Adrenal gland (tissue), 19 donors: ENCODE measurements at regions of chr19 and their contacts with region 1.

Region 1: GRCh38 chr19:6048808-6049405 is 61.4 kb downstream of the RFX2 start:
- DNase-seq: peak; percentile 67 to 90 (median 78)
- H3K4me3 ChIP-seq: no peak overlapping the region
- H3K27ac ChIP-seq: no peak overlapping the region
- H3K4me1 ChIP-seq: peaks cover 0 to 6% of the 10 kb centered on the region in 2 donors
- H3K27me3 ChIP-seq: no peaks in the 10 kb centered on the region
- CTCF ChIP-seq: peak; percentile 77 to 93 (median 84)
- POLR2A ChIP-seq: no peak

Region 2: GRCh38 chr19:6125571-6125989 is 76.7 kb after region 1 on chr19:
- intact Hi-C with region 1: loop called (anchors 2 to 5 kb)
- DNase-seq: peak; percentile 57 to 84 (median 65)
- H3K4me3 ChIP-seq: no peak overlapping the region
- H3K27ac ChIP-seq: no peak overlapping the region
- H3K4me1 ChIP-seq: no peaks in the 10 kb centered on the region
- H3K27me3 ChIP-seq: no peaks in the 10 kb centered on the region
- CTCF ChIP-seq: peak; percentile 86 to 95 (median 92)
- POLR2A ChIP-seq: no peak

Region 3: DNA sequence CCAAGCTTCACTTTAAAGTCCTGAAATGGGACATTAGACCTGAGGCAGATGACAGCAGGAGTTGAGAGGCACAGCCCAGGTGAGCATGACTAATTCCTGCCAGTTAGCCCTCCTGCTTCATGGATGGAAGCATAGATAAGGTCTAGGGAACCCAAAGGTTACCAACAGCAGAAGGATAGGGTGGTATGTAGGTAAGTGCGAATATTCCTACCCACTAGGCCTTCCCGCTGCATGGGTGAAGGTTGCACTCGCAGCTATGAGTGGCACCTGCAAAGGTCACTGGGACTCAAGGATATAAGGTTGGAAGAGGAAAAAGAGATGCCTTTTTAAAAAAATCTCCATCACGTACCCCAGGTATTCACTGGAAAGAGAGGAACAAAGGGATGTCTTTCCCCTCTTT is 243.1 kb after region 1 on chr19:
- intact Hi-C with region 1: loop called in 1 of 2 experiments (anchors 10 kb)
- DNase-seq: no peak
- H3K4me3 ChIP-seq: no peak overlapping the region
- H3K27ac ChIP-seq: no peak overlapping the region
- H3K4me1 ChIP-seq: no peaks in the 10 kb centered on the region
- H3K27me3 ChIP-seq: no peaks in the 10 kb centered on the region
- CTCF ChIP-seq: no peak
- POLR2A ChIP-seq: no peak